ENCODE measurements at regions of chr6 and their contacts with region 1.

Region 1: GRCh38 chr6:152552616-152553209 is 84.4 kb downstream of the SYNE1 start:
- DNase-seq: peak; percentile 6 to 24
- ATAC-seq: peak; percentile 61 to 68
- H3K4me3 ChIP-seq: no peak overlapping the region
- H3K27ac ChIP-seq: no peak overlapping the region
- H3K4me1 ChIP-seq: no peaks in the 10 kb centered on the region
- H3K27me3 ChIP-seq: no peaks in the 10 kb centered on the region
- CTCF ChIP-seq: peak; percentile 55 to 79 (median 63)
- POLR2A ChIP-seq: no peak

Region 2: GRCh38 chr6:152642989-152643388 is 90.3 kb after region 1 on chr6:
- in situ Hi-C with region 1: no loop called
- intact Hi-C with region 1: loop called (anchors 2 kb)
- DNase-seq: no peak
- ATAC-seq: peak in 1 of 2 donors; percentile 42
- H3K4me3 ChIP-seq: no peak overlapping the region
- H3K27ac ChIP-seq: no peak overlapping the region
- H3K4me1 ChIP-seq: no peaks in the 10 kb centered on the region
- H3K27me3 ChIP-seq: no peaks in the 10 kb centered on the region
- CTCF ChIP-seq: peak in 3 of 5 experiments; percentile 30 to 53 (median 47)
- POLR2A ChIP-seq: no peak

Region 3: GRCh38 chr6:152669895-152670294 is 117.2 kb after region 1 on chr6:
- in situ Hi-C with region 1: loop called in 1 of 4 experiments (anchors 10 kb)
- intact Hi-C with region 1: no loop called
- DNase-seq: no peak
- ATAC-seq: no peak
- H3K4me3 ChIP-seq: no peak overlapping the region
- H3K27ac ChIP-seq: no peak overlapping the region
- H3K4me1 ChIP-seq: no peaks in the 10 kb centered on the region
- H3K27me3 ChIP-seq: no peaks in the 10 kb centered on the region
- CTCF ChIP-seq: peak in 3 of 5 experiments; percentile 19 to 29 (median 27)
- POLR2A ChIP-seq: no peak

Region 4: DNA sequence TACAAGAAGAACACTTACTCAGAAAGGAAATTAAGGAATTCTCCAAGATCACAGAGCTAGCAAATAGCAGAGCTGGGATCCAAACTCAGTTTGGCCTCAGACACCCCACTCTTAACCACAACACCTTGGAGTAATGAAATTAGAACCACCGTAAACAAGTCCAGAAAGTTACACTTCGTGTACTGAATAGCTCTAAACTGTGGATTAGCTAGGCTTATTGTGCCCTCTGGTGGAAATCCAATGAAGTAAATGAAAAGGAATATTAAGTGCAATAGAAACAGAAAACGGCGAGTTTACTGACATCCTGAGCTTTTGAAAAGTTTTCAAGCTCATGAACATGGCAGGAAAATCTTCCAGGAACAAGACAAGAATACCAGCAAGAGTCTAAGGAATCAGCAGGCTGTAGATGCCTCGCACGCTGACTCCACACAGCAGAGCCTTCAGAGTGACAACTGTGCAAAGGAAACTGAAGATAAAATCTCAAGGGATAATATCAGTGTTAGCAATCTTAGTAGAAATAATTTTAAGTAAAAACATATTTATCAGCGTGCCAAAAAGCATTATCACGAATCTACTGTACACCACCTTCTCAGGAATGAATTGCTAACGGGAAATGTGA is 395.5 kb after region 1 on chr6:
- in situ Hi-C with region 1: no loop called
- intact Hi-C with region 1: loop called (anchors 2 kb)
- DNase-seq: no peak
- ATAC-seq: peak; percentile 78 to 89
- H3K4me3 ChIP-seq: peak overlapping the region in 1 of 4 donors; percentile 21
- H3K27ac ChIP-seq: no peak overlapping the region
- H3K4me1 ChIP-seq: peaks cover 4 to 9% of the 10 kb centered on the region in 2 donors
- H3K27me3 ChIP-seq: no peaks in the 10 kb centered on the region
- CTCF ChIP-seq: peak; percentile 52 to 72 (median 69)
- POLR2A ChIP-seq: no peak

Measured in gastrocnemius medialis (tissue), 4 donors.